ENCODE measurements at regions of chr2 and their contacts with region 1.

Region 1: DNA sequence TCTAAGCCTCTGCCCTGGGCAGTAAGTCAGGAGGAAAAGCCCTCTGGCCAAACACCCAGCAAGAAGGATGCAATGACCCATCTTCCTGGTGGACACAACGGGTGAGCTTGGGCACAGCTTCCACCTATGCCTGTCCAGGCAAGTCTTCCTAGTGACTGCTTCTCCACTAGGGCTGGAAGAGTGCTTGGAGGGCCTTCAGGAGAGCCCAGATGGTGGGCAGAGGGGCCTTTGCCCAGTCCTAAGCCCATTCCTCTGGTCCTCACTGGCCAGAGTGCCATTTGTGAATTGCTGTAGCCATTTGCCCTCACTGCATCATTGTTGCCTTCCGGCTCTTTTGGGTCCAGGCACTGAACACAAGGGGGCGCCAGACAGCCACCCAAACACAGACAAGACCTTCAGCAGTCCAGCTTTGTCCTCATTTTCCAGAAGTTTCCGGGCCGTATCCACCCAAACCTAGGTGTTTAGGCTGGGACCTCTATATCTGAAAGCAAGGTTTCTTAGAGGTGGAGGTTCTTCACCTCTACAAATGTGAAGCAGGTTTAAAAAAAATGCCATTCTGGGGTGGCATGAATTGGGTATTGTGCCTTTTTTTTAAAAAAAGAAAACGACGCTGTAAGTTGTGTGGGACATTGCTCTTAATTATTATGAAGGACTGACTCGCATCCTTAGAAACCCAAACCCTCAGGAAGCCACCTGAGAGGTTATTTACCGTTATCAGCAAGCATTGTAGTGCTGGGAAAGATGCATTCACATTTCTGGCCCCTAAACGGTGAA is 29.5 kb downstream of the PAX8 start:
- DNase-seq: peak; percentile 68 to 86 (median 77)
- ATAC-seq: peak; percentile 46 to 84 (median 74)
- H3K4me3 ChIP-seq: no peak overlapping the region
- H3K27ac ChIP-seq: no peak overlapping the region
- H3K4me1 ChIP-seq: peaks cover 0 to 28% (median 0%) of the 10 kb centered on the region in 12 donors
- H3K27me3 ChIP-seq: no peaks in the 10 kb centered on the region
- CTCF ChIP-seq: peak; percentile 85 to 95 (median 91)
- POLR2A ChIP-seq: no peak

Region 2: GRCh38 chr2:112920923-112921532 is 328.2 kb before region 1 on chr2:
- intact Hi-C with region 1: no loop called
- DNase-seq: no peak
- ATAC-seq: no peak
- H3K4me3 ChIP-seq: no peak overlapping the region
- H3K27ac ChIP-seq: no peak overlapping the region
- H3K4me1 ChIP-seq: no peaks in the 10 kb centered on the region
- H3K27me3 ChIP-seq: peaks cover 0 to 22% (median 0%) of the 10 kb centered on the region in 9 donors
- CTCF ChIP-seq: no peak
- POLR2A ChIP-seq: no peak

Region 3: DNA sequence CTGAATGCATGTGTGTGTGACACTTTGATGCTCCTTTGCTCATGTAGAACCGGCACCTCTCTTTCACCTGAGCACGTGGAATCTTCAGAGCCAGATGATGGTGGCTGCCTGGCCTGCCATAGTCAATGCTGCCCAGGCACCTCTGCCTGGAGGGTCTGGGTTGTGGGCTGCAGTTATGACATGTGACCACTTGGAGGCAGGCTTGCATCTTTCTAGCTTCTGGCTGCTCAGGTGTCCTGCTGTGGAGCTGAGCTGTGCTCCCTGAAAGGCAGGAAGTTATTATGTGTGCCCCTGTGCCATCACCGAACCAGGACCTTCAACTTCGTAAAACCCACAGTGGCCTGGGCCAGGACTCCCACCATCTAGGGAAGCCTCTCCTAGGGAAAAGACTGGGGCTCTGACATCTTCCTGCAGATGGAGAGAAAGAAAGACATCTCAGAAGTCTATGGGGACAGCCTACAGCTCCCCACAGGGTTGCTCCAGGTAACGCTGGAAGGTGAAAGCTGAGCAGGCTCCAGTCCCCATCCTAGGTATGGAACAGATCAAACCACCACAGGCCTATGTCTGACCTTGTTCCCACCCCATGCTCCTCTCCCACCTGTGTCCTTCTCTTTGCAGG is 45.2 kb before region 1 on chr2:
- intact Hi-C with region 1: loop called in 9 of 10 experiments (anchors 2 to 5 kb)
- DNase-seq: peak in 4 of 5 donors; percentile 55 to 68 (median 64)
- ATAC-seq: peak; percentile 67 to 81 (median 76)
- H3K4me3 ChIP-seq: no peak overlapping the region
- H3K27ac ChIP-seq: no peak overlapping the region
- H3K4me1 ChIP-seq: peaks cover 0 to 8% (median 2%) of the 10 kb centered on the region in 12 donors
- H3K27me3 ChIP-seq: no peaks in the 10 kb centered on the region
- CTCF ChIP-seq: peak; percentile 82 to 94 (median 86)
- POLR2A ChIP-seq: no peak

Region 4: GRCh38 chr2:113209011-113209641 is 40.1 kb before region 1 on chr2:
- intact Hi-C with region 1: loop called in 9 of 10 experiments (anchors 2 to 5 kb)
- DNase-seq: no peak
- ATAC-seq: no peak
- H3K4me3 ChIP-seq: no peak overlapping the region
- H3K27ac ChIP-seq: no peak overlapping the region
- H3K4me1 ChIP-seq: peaks cover 3 to 26% (median 21%) of the 10 kb centered on the region in 12 donors
- H3K27me3 ChIP-seq: no peaks in the 10 kb centered on the region
- CTCF ChIP-seq: no peak
- POLR2A ChIP-seq: no peak

Region 5: GRCh38 chr2:113309655-113310387 is 60.6 kb after region 1 on chr2:
- intact Hi-C with region 1: no loop called
- DNase-seq: no peak
- ATAC-seq: peak in 1 of 4 donors; percentile 7
- H3K4me3 ChIP-seq: no peak overlapping the region
- H3K27ac ChIP-seq: no peak overlapping the region
- H3K4me1 ChIP-seq: no peaks in the 10 kb centered on the region
- H3K27me3 ChIP-seq: no peaks in the 10 kb centered on the region
- CTCF ChIP-seq: no peak
- POLR2A ChIP-seq: no peak

Region 6: GRCh38 chr2:113370478-113371091 is 121.4 kb after region 1 on chr2:
- intact Hi-C with region 1: loop called (anchors 1 to 5 kb)
- DNase-seq: peak in 4 of 5 donors; percentile 55 to 64 (median 58)
- ATAC-seq: peak; percentile 77 to 95 (median 92)
- H3K4me3 ChIP-seq: no peak overlapping the region
- H3K27ac ChIP-seq: no peak overlapping the region
- H3K4me1 ChIP-seq: no peaks in the 10 kb centered on the region
- H3K27me3 ChIP-seq: no peaks in the 10 kb centered on the region
- CTCF ChIP-seq: peak; percentile 47 to 82 (median 71)
- POLR2A ChIP-seq: no peak

Measured in heart left ventricle (tissue), 16 donors.